CD8-positive, alpha-beta T cell (primary cell): ENCODE measurements at regions of chr10 and their contacts with region 1.

Region 1: GRCh38 chr10:97714048-97714371 is 480 bp downstream of the MARVELD1 start:
- DNase-seq: peak in 8 of 9 experiments; percentile 19 to 82 (median 59)
- ATAC-seq: peak; percentile 83
- H3K4me3 ChIP-seq: peak overlapping the region; percentile 57 to 63
- H3K4me3 Mint-ChIP-seq: peak overlapping the region; percentile 99
- H3K27ac ChIP-seq: no peak overlapping the region
- H3K27ac Mint-ChIP-seq: peak overlapping the region; percentile 82
- H3K4me1 ChIP-seq: peaks cover 9% of the 10 kb centered on the region
- H3K4me1 Mint-ChIP-seq: peaks cover 15% of the 10 kb centered on the region
- H3K27me3 ChIP-seq: peaks cover 0 to 3% of the 10 kb centered on the region in 2 experiments
- H3K27me3 Mint-ChIP-seq: peaks cover 17% of the 10 kb centered on the region
- CTCF ChIP-seq: no peak

Region 2: GRCh38 chr10:97596101-97597062 is 117.6 kb before region 1 on chr10:
- CTCF ChIA-PET with region 1: no interaction called
- POLR2A ChIA-PET with region 1: no interaction called
- intact Hi-C with region 1: no loop called
- DNase-seq: no peak
- ATAC-seq: no peak
- H3K4me3 ChIP-seq: no peak overlapping the region
- H3K4me3 Mint-ChIP-seq: no peak overlapping the region
- H3K27ac ChIP-seq: no peak overlapping the region
- H3K27ac Mint-ChIP-seq: no peak overlapping the region
- H3K4me1 ChIP-seq: no peaks in the 10 kb centered on the region
- H3K4me1 Mint-ChIP-seq: no peaks in the 10 kb centered on the region
- H3K27me3 ChIP-seq: no peaks in the 10 kb centered on the region
- H3K27me3 Mint-ChIP-seq: no peaks in the 10 kb centered on the region
- CTCF ChIP-seq: no peak

Region 3: GRCh38 chr10:97743169-97743943 is 29.3 kb after region 1 on chr10:
- CTCF ChIA-PET with region 1: interaction called, 10 read pairs
- POLR2A ChIA-PET with region 1: no interaction called
- intact Hi-C with region 1: no loop called
- DNase-seq: no peak
- ATAC-seq: no peak
- H3K4me3 ChIP-seq: no peak overlapping the region
- H3K4me3 Mint-ChIP-seq: no peak overlapping the region
- H3K27ac ChIP-seq: no peak overlapping the region
- H3K27ac Mint-ChIP-seq: no peak overlapping the region
- H3K4me1 ChIP-seq: peaks cover 22% of the 10 kb centered on the region
- H3K4me1 Mint-ChIP-seq: peaks cover 54% of the 10 kb centered on the region
- H3K27me3 ChIP-seq: no peaks in the 10 kb centered on the region
- H3K27me3 Mint-ChIP-seq: no peaks in the 10 kb centered on the region
- CTCF ChIP-seq: no peak

Region 4: DNA sequence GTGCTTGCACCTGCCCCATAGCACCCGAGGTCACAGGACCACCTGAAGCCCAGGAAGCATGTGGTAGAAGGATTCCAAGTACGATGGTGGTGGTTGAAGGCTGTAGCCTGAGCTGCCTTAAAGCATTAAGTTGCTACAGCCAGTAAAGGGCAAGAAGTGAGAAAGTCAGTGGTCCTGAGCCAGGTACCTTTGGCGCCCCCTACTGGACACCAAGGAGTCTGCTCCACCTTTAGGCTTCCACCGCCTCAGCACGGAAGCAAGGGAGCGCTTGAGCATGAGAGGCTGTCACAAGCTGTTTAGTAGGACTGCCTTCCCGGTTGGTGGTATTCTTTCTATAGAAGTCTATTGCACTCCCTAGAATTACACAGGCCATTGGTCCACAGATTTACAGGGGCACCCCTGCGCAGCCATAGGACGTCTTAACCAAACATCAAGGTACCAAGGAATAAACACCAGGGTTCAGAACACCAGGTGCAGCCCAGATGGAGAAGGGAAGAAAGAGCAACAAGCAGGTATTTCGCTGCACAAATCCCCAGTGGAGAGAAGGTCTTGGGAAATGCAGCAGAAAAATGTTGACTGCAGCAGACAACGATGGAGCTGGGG is 314.3 kb after region 1 on chr10:
- CTCF ChIA-PET with region 1: interaction called, 3 read pairs
- POLR2A ChIA-PET with region 1: no interaction called
- intact Hi-C with region 1: loop called in 1 of 2 experiments (anchors 5 kb)
- DNase-seq: peak; percentile 25 to 74 (median 62)
- ATAC-seq: peak; percentile 66
- H3K4me3 ChIP-seq: no peak overlapping the region
- H3K4me3 Mint-ChIP-seq: no peak overlapping the region
- H3K27ac ChIP-seq: no peak overlapping the region
- H3K27ac Mint-ChIP-seq: no peak overlapping the region
- H3K4me1 ChIP-seq: peaks cover 4% of the 10 kb centered on the region
- H3K4me1 Mint-ChIP-seq: peaks cover 7% of the 10 kb centered on the region
- H3K27me3 ChIP-seq: peaks cover 5 to 23% of the 10 kb centered on the region in 2 experiments
- H3K27me3 Mint-ChIP-seq: peaks cover 53% of the 10 kb centered on the region
- CTCF ChIP-seq: peak; percentile 60